HCT116 (cell line): ENCODE measurements at regions of chr1 and their contacts with region 1.

Region 1: GRCh38 chr1:26889551-26890466 is at the start of gene GPN2:
- DNase-seq: peak; percentile 51
- ATAC-seq: peak; percentile 93
- H3K4me3 ChIP-seq: peak within 1 kb of the TSS; percentile 81 to 93
- H3K27ac ChIP-seq: peak within 1 kb of the TSS; percentile 86
- H3K4me1 ChIP-seq: peaks cover 4 to 19% of the 10 kb centered on the region in 2 experiments; a peak in 3 of 4 replicates
- H3K27me3 ChIP-seq: no peaks in the 10 kb centered on the region
- CTCF ChIP-seq: no peak
- POLR2A ChIP-seq: peak; percentile 87
- RAD21 ChIP-seq: peak; percentile 5; the same call in 1 of the 2 replicates
- total RNA-seq, gene GPN2: 37.2 TPM

Region 2: GRCh38 chr1:26900001-26900814 is 10.4 kb after region 1 on chr1 and contains the start of gene GPATCH3:
- CTCF ChIA-PET with region 1: interaction called, 3 read pairs
- POLR2A ChIA-PET with region 1: interaction called, 17 read pairs
- RAD21 ChIA-PET with region 1: no interaction called
- intact Hi-C with region 1: no loop called
- DNase-seq: peak; percentile 85
- ATAC-seq: peak; percentile 90
- H3K4me3 ChIP-seq: peak within 1 kb of the TSS; percentile 92 to 99
- H3K27ac ChIP-seq: peak within 1 kb of the TSS; percentile 61
- H3K4me1 ChIP-seq: peaks cover 0 to 17% of the 10 kb centered on the region in 2 experiments; a peak in 2 of 4 replicates
- H3K27me3 ChIP-seq: no peaks in the 10 kb centered on the region
- CTCF ChIP-seq: no peak
- POLR2A ChIP-seq: peak; percentile 96
- RAD21 ChIP-seq: no peak
- total RNA-seq, gene GPATCH3: 14.8 TPM